Calu3 (cell line): ENCODE measurements at regions of chr6 and their contacts with region 1.

Region 1: DNA sequence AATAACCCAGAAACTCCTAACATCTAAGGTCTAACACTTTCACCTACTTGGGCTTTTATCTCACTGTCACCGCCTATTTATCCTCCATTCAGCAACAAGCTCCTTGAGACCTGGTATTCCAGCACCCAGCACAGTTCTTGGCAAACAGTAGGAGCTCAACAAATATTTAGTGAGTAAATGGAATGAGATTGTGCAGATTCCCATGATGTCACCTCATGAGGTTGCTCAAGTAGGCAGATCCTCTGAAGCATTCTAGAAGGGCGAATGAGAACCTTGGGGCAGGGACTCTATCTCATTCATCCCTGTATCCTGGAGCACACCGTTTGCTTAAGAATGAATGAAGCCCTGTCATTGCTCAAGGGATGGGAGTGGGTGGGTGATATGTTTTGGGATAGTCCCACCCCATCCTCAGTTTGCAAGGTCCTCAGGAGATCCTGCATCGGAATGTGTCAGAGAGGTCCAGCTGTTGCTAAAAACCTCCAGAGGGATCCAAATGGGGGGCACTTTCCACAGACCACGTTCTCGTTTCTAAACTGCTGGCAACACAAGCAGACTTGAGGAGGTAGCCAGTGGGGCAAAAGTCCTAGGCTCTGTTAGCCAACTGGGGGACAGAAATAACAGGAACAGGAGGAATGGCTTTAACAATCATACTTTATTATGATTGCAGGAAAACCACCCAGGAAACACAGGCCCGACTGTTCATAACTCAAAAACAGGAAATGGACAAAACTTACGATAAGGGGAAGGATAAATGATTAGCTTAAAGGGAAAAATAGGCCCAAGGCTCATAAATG is 42.0 kb downstream of the EDN1 start:
- DNase-seq: peak; percentile 47
- H3K4me3 Mint-ChIP-seq: peak overlapping the region; percentile 24
- H3K27ac Mint-ChIP-seq: peak overlapping the region; percentile 92
- H3K4me1 Mint-ChIP-seq: peaks cover 46% of the 10 kb centered on the region
- H3K27me3 Mint-ChIP-seq: no peaks in the 10 kb centered on the region
- CTCF ChIP-seq: no peak

Region 2: GRCh38 chr6:12363651-12364381 is 31.7 kb after region 1 on chr6:
- CTCF ChIA-PET with region 1: interaction called, 13 read pairs
- intact Hi-C with region 1: loop called (anchors 5 kb)
- DNase-seq: peak; percentile 62
- H3K4me3 Mint-ChIP-seq: peak overlapping the region; percentile 52
- H3K27ac Mint-ChIP-seq: peak overlapping the region; percentile 97
- H3K4me1 Mint-ChIP-seq: peaks cover 44% of the 10 kb centered on the region
- H3K27me3 Mint-ChIP-seq: no peaks in the 10 kb centered on the region
- CTCF ChIP-seq: no peak

Region 3: DNA sequence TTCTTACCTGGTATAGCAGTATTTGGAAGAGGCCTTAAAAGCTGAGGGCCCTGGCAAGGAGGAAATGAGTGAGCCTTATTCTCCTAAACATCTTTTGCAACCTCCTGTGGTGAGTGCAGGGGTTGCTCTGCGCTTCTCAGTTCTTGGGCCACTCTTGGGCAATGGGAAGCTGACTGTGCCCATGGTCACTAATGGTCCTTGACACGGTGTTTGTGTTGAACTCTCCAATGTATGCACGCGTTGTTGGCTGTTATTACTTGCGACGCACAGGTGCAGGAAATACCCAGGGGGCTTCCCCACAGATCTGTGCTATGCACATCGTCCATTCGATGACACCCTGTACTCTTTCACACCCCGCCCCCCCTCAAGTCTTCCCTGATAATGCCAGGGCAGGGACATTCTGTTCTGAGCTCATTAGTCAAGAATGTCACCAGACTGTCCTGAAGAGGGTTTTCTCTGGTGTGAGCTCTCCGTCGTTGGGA is 37.7 kb after region 1 on chr6:
- CTCF ChIA-PET with region 1: interaction called, 13 read pairs
- intact Hi-C with region 1: loop called (anchors 5 kb)
- DNase-seq: peak; percentile 28
- H3K4me3 Mint-ChIP-seq: no peak overlapping the region
- H3K27ac Mint-ChIP-seq: no peak overlapping the region
- H3K4me1 Mint-ChIP-seq: peaks cover 43% of the 10 kb centered on the region
- H3K27me3 Mint-ChIP-seq: no peaks in the 10 kb centered on the region
- CTCF ChIP-seq: no peak

Region 4: DNA sequence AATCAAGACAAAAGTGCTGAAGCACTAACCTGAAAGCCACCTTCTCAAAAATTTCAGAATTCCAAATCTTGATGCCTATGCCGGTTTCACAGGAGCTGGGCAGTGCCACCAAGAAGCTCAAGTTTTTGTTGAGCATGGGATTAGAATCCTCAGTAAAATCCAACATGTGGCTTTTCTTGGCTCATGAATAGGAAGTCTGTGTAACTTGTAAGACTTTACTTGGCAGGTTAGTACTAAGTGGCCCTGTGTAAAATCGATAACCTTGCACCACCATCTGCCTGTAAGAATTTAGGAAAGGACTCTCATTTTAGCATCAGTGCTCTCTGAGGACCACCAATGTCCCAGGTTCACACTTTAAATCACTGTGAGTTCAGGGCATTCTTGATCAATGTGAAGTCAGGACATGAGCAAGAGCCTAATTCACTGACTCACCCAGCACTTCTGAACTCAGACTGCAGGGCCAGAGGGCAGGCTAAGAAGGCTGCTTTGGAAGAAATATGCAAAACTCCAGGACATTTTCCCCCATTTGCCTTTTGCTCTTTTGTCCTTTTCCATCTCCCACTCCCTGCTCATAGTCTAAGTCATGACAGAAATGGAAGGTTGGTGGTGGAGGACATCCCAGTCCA is 71.2 kb after region 1 on chr6:
- CTCF ChIA-PET with region 1: no interaction called
- intact Hi-C with region 1: no loop called
- DNase-seq: no peak
- H3K4me3 Mint-ChIP-seq: no peak overlapping the region
- H3K27ac Mint-ChIP-seq: no peak overlapping the region
- H3K4me1 Mint-ChIP-seq: no peaks in the 10 kb centered on the region
- H3K27me3 Mint-ChIP-seq: no peaks in the 10 kb centered on the region
- CTCF ChIP-seq: no peak

Region 5: DNA sequence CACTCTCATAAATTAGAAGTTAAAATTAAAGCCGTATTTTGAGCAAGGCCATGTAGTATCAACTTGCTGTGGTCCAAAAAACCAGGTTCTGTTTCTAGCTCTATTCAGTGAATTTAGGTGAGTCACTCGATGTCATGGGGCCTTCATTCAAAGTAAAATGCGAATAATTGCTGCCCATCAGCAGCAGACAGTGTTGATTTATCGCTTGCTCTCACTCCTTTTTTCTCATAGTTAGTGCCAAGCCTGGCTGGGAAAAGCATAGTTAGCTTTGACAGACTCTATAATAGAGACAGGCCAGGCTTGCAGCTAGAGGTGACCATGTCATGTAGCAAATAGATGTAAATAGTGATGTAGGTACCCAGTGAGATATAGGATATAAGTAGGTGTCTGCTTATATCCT is 94.0 kb after region 1 on chr6:
- CTCF ChIA-PET with region 1: no interaction called
- intact Hi-C with region 1: no loop called
- DNase-seq: no peak
- H3K4me3 Mint-ChIP-seq: no peak overlapping the region
- H3K27ac Mint-ChIP-seq: no peak overlapping the region
- H3K4me1 Mint-ChIP-seq: no peaks in the 10 kb centered on the region
- H3K27me3 Mint-ChIP-seq: no peaks in the 10 kb centered on the region
- CTCF ChIP-seq: no peak

Region 6: GRCh38 chr6:12490904-12491571 is 158.9 kb after region 1 on chr6:
- CTCF ChIA-PET with region 1: no interaction called
- intact Hi-C with region 1: loop called (anchors 5 kb)
- DNase-seq: peak; percentile 39
- H3K4me3 Mint-ChIP-seq: no peak overlapping the region
- H3K27ac Mint-ChIP-seq: peak overlapping the region; percentile 77
- H3K4me1 Mint-ChIP-seq: peaks cover 33% of the 10 kb centered on the region
- H3K27me3 Mint-ChIP-seq: no peaks in the 10 kb centered on the region
- CTCF ChIP-seq: no peak